Heart left ventricle (tissue), 16 donors: ENCODE measurements at regions of chr2 and their contacts with region 1.

Region 1: GRCh38 chr2:125745514-125745913 is 910.4 kb upstream of the GYPC start:
- DNase-seq: no peak
- ATAC-seq: peak; percentile 32 to 77 (median 61)
- H3K4me3 ChIP-seq: no peak overlapping the region
- H3K27ac ChIP-seq: no peak overlapping the region
- H3K4me1 ChIP-seq: no peaks in the 10 kb centered on the region
- H3K27me3 ChIP-seq: no peaks in the 10 kb centered on the region
- CTCF ChIP-seq: peak in 7 of 12 donors; percentile 18 to 55 (median 44)
- POLR2A ChIP-seq: no peak

Region 2: GRCh38 chr2:125471963-125472362 is 273.6 kb before region 1 on chr2:
- intact Hi-C with region 1: no loop called
- DNase-seq: no peak
- ATAC-seq: no peak
- H3K4me3 ChIP-seq: no peak overlapping the region
- H3K27ac ChIP-seq: no peak overlapping the region
- H3K4me1 ChIP-seq: no peaks in the 10 kb centered on the region
- H3K27me3 ChIP-seq: no peaks in the 10 kb centered on the region
- CTCF ChIP-seq: no peak
- POLR2A ChIP-seq: no peak

Region 3: GRCh38 chr2:126634273-126634861 is 888.9 kb after region 1 on chr2:
- intact Hi-C with region 1: loop called in 1 of 10 experiments (anchors 10 kb)
- DNase-seq: peak in 1 of 5 donors; percentile 33
- ATAC-seq: no peak
- H3K4me3 ChIP-seq: no peak overlapping the region
- H3K27ac ChIP-seq: no peak overlapping the region
- H3K4me1 ChIP-seq: peaks cover 0 to 16% (median 4%) of the 10 kb centered on the region in 12 donors
- H3K27me3 ChIP-seq: no peaks in the 10 kb centered on the region
- CTCF ChIP-seq: peak in 11 of 12 donors; percentile 8 to 53 (median 33)
- POLR2A ChIP-seq: no peak

Region 4: GRCh38 chr2:126971481-126972278 is 1226.2 kb after region 1 on chr2:
- intact Hi-C with region 1: loop called in 6 of 10 experiments (anchors 5 to 10 kb)
- DNase-seq: peak; percentile 47 to 85 (median 67)
- ATAC-seq: peak; percentile 79 to 93 (median 88)
- H3K4me3 ChIP-seq: peak overlapping the region in 11 of 12 donors; percentile 20 to 61 (median 52)
- H3K27ac ChIP-seq: peak overlapping the region in 1 of 12 donors; percentile 35
- H3K4me1 ChIP-seq: peaks cover 0 to 14% (median 5%) of the 10 kb centered on the region in 12 donors
- H3K27me3 ChIP-seq: peaks cover 0 to 42% (median 7%) of the 10 kb centered on the region in 9 donors
- CTCF ChIP-seq: peak; percentile 88 to 98 (median 96)
- POLR2A ChIP-seq: no peak